GM13976 (cell line): ENCODE measurements at regions of chr2 and their contacts with region 1.

Region 1: GRCh38 chr2:105388971-105389381 is 9.9 kb downstream of the FHL2 start:
- DNase-seq: no peak
- CTCF ChIP-seq: no peak

Region 2: DNA sequence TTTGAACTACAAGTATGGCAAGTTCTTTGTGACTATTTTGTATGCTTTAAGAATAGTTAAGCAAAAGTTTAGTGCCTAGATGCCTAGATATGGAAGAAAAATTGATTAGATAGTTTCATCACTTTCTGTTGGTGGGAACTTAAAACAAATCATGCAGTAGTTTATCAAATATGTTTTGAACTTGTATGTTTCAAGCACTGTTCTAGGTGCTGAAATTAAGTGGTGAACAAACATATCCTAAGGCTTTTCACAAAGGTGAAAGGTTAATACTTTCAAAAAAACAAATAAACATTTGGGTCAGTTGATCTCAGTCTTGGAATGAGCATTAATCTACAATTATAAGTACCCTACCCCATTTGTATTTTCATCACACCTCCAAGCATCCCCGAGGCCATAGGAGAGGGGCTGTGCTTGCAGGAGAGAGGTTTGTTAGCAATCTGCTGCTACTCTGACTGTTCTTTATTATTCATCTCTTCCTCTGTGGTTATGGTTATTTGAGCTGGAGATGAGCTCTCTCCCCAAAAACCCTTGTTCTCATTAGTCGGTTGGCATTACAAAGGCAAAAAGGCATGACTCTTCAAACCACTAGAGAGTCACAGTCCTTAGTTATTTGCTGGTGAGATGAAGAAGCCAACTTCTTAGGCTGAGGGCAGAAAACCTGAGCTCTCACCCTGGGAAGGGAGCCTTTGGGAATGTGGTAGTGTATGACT is 113.8 kb after region 1 on chr2:
- in situ Hi-C with region 1: loop called (anchors 10 kb)
- DNase-seq: no peak
- CTCF ChIP-seq: no peak

Region 3: DNA sequence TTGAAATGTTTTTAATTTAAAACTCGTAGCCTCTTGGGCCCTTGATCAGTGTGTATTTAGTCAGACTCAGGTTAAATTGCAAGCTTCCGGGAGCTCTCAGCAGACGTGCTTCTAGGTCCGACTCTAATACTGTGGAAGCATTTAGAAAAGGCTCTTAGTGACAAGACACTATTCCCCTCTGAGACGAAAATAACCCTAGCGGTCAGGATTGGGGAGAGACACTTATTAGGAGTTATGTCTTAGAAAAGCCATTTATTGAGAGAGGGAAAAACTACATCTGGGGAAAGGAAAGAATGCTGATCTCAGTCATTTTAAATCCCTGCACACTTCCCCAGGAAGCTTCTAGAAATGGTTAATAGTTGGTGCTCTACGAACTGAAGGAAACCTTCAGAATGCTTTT is 245.2 kb after region 1 on chr2:
- in situ Hi-C with region 1: no loop called
- DNase-seq: no peak
- CTCF ChIP-seq: no peak